HEK293T (cell line): ENCODE measurements at regions of chr3 and their contacts with region 1.

Region 1: GRCh38 chr3:49411968-49412631 is at the starts of genes RHOA and TCTA:
- DNase-seq: peak; percentile 96

Region 2: DNA sequence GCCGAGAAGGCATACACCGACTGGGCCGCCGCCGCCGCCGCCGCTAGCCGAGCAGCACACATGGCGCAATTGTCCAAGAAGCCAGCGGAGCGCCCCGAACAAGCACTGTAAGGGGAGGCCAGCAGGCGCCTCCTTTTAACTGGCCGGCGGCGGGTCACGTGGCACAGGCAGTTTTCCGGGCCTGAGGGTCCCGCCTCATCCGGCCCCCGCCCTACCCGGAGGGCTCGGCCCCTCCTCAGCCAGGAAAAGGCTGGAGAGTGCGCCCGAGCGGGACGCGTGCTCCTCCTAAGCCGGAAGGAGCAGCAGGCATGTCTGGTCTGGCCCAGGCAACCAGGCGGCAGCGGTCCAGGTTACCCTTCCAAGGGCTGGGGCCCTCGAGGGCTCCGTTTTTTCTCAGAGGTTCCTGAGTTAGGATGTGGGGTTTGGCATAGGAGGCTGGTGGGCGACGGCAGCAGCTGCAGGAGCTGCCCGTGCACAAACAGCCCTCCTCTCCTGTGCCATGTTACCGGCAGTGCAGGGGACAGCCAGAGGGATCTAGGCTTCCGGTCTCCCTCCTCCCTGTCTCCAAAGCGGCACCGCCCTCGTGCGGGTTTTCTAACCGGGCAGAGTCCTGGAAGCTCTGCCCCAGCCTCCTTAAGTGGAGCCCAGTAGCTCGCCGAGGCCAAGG is 53.8 kb before region 1 on chr3 and contains the start of gene GPX1:
- CTCF ChIA-PET with region 1: interaction called, 3 read pairs
- POLR2A ChIA-PET with region 1: interaction called, 14 read pairs
- DNase-seq: peak; percentile 92

Region 3: DNA sequence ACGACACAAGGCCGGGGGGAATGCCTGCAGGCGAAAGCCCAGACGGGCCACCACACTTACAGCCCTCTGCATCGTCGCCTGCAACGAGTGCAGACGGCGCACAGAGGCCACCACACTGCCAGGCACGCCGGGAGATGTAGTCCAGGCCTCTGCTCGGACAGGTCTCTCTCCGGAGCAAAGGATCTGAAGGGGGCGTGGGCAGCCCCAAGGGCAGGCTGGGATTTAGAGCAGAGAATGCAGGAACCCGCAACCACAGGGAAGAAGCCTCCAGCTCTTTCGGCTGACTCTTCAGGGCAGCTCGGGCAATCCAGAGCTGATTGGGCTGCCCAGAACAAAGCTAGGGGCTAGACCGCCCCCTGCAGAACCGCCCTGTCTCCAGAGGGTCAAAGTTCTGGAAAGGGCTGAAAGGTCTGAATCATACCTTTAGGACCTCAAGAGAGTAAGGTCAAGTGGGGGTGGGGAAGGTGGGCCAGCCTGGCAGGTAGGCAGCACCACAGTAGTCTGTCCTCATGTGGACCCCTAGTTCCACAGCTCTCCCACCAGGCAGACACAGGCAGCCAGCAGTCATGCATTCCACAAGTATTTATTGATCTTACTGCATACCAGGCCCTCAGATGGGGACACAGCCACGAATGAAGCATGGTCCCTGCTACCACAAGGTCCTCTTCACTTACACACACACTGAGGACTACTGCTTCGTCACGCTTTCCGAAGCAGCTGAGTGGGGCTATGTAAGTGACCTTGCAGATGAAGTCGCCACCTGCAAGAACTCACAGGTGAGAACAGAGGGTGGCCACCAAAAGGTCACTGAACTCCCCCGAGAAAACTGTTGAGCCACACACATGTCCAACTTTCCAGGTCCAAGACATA is 10.5 kb after region 1 on chr3 and contains the start of gene AMT:
- CTCF ChIA-PET with region 1: no interaction called
- POLR2A ChIA-PET with region 1: interaction called, 16 read pairs
- DNase-seq: no peak

Region 4: GRCh38 chr3:49428697-49429100 is 16.6 kb after region 1 on chr3:
- CTCF ChIA-PET with region 1: no interaction called
- POLR2A ChIA-PET with region 1: interaction called, 16 read pairs
- DNase-seq: no peak